GM10248 (cell line): ENCODE measurements at regions of chr9 and their contacts with region 1.

Region 1: GRCh38 chr9:4339357-4339756 is 39.5 kb upstream of the GLIS3 start:
- DNase-seq: peak; percentile 75
- CTCF ChIP-seq: peak; percentile 91

Region 2: GRCh38 chr9:3732077-3733038 is 607.0 kb before region 1 on chr9:
- CTCF ChIA-PET with region 1: interaction called, 22 read pairs
- POLR2A ChIA-PET with region 1: no interaction called
- DNase-seq: peak; percentile 68
- CTCF ChIP-seq: peak; percentile 39

Region 3: DNA sequence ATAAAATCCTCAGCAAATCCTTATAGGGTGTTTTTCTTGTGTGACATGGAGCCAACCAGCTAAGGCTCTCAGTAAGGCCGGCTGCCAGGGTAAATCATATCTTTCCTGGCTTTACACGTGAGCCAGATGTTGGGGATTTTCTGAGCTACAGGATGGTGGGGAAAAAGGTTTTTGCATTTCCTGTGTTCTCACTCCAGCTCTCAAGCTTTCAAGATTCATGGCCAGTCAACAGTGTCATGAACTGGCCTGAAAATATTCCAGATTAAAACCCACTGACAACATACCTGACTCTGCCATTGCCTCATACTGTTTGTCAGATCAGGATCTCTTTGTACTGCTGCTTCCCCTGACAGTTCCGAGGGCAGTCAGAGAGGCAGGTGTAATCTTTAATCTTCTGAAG is 346.4 kb before region 1 on chr9:
- CTCF ChIA-PET with region 1: no interaction called
- POLR2A ChIA-PET with region 1: no interaction called
- DNase-seq: no peak
- CTCF ChIP-seq: no peak

Region 4: GRCh38 chr9:4077499-4078102 is 261.8 kb before region 1 on chr9:
- CTCF ChIA-PET with region 1: interaction called, 23 read pairs
- POLR2A ChIA-PET with region 1: no interaction called
- DNase-seq: peak; percentile 42
- CTCF ChIP-seq: peak; percentile 72

Region 5: GRCh38 chr9:4235871-4236804 is 103.2 kb before region 1 on chr9:
- CTCF ChIA-PET with region 1: no interaction called
- POLR2A ChIA-PET with region 1: no interaction called
- DNase-seq: peak; percentile 34
- CTCF ChIP-seq: no peak

Region 6: GRCh38 chr9:4289411-4290380 is 49.7 kb before region 1 on chr9:
- CTCF ChIA-PET with region 1: no interaction called
- POLR2A ChIA-PET with region 1: no interaction called
- DNase-seq: no peak
- CTCF ChIP-seq: no peak

Region 7: DNA sequence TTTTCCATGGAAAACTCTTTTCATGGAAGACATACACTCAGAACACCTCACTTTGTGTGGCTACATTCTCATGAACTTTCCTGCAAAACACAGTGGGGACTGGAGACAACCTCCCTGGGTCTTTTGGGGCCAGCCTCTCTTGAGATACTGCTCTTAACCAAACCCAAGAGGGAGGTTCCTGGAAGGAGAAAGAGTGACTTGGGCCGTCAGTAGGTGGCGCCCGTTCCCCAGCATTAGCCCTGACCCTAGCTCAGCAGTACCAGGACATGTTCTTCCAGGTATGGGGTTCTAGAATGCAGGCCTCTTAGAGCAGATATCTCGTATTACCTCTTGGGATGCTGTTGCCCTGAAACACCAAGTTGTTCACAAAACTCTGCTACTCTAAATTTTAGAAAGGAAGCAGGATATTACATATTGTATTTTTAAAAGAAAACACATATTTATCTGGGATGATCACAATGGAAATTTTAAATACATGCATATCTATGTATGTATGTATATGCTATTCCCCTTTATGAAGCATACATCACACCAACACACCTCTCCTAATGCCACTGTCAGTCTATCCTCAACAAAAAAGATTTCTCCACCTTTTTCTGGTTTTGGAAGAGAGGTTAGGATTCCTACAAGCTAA is 23.7 kb before region 1 on chr9:
- CTCF ChIA-PET with region 1: interaction called, 89 read pairs
- POLR2A ChIA-PET with region 1: no interaction called
- DNase-seq: peak; percentile 75
- CTCF ChIP-seq: peak; percentile 84

Region 8: DNA sequence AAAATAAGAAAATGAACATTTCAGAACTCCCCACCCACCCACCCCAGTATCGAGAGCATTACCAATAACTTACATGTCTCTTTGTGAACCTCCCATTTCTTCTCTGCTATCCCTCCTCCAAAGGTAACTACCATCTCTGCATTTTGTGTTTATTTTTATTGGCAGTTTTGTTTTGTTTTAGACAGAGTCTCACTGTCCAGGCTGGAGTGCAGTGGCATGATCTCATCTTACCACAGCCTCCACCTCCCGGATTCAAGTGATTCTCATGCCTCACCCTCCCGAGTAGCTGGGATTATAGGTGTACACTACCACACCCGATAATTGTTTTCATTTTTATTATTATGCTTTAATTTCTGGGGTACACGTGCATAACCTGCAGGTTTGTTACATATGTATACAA is 17.8 kb before region 1 on chr9:
- CTCF ChIA-PET with region 1: interaction called, 89 read pairs
- POLR2A ChIA-PET with region 1: no interaction called
- DNase-seq: no peak
- CTCF ChIP-seq: no peak

Region 9: GRCh38 chr9:4327504-4328191 is 11.7 kb before region 1 on chr9:
- CTCF ChIA-PET with region 1: interaction called, 40 read pairs
- POLR2A ChIA-PET with region 1: no interaction called
- DNase-seq: no peak
- CTCF ChIP-seq: no peak

Region 10: GRCh38 chr9:4353236-4353635 is 13.9 kb after region 1 on chr9:
- CTCF ChIA-PET with region 1: interaction called, 40 read pairs
- POLR2A ChIA-PET with region 1: no interaction called
- DNase-seq: no peak
- CTCF ChIP-seq: no peak